ENCODE measurements at regions of chr5 and their contacts with region 1.

Region 1: DNA sequence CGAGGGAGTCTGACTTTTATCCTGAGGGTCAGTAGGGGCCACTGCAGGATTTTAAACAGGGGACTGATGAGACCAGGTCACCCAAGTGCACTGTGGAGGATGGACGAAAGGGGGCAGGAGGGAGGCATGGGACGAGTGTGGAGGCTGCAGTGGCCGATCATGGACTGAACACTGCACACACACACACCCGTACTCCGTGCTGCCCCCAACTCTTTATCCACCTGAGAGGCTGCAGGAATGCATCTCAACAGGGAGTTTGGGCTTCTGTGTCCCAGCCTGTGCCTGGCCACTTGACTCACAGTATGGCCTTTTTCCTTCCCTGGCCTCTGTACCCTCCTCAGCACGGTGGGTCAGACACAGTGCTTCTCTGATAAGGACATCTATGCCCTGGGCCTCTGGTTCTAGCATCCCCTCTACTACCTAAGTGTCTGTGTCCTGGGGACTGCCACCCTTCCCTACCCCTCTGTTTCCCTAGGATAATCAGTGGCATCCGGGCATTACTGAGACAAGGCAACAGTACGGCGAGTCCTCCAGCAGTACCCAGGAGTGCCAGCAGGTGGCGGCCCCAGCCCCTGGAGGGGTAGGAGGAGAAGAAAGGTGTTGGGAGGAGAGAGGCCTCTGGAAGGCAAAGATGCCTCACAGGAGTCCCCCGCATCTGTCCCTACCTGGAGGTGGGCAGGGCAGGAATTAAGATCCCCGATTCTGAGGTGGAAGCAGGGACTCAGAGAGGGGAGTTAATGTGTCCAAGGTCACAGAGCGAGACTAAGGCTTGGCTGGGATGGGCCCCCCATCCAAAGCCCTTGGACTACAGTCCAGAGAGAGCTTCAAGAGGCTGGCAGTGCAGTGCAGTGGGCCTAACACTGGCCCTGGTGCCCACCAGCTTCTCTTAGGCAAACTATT is 5.1 kb upstream of the CDX1 start:
- ATAC-seq: peak; percentile 60 to 87 (median 74)
- H3K4me3 ChIP-seq: no peak overlapping the region
- H3K27ac ChIP-seq: no peak overlapping the region
- H3K4me1 ChIP-seq: peaks cover 22 to 32% of the 10 kb centered on the region in 2 donors

Region 2: GRCh38 chr5:150217873-150218692 is 56.6 kb after region 1 on chr5:
- in situ Hi-C with region 1: loop called in 1 of 9 experiments (anchors 5 kb)
- ATAC-seq: peak; percentile 40 to 96 (median 94)
- H3K4me3 ChIP-seq: no peak overlapping the region
- H3K27ac ChIP-seq: no peak overlapping the region
- H3K4me1 ChIP-seq: no peaks in the 10 kb centered on the region

Region 3: DNA sequence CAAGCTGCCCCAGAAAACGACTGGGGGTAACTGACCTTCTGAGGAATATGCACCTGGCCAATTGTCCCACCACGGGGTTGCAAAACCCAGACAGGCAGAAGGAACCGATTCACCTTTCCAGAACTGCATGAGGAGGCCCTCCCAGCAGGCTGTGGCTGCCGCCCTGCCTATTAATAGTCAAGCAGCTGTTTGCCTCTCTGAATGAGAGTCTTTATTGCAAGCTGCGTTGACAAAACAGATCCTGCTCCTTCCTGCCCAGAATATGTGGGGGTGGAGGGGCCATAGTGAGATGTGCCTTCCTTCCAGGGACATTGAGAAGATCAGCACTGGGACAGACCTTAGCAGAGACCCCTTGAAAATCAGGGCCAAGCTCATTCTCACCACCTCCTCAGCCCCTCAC is 177.7 kb after region 1 on chr5:
- in situ Hi-C with region 1: loop called in 1 of 9 experiments (anchors 25 kb)
- ATAC-seq: peak in 7 of 8 experiments; percentile 21 to 94 (median 47)
- H3K4me3 ChIP-seq: no peak overlapping the region
- H3K27ac ChIP-seq: no peak overlapping the region
- H3K4me1 ChIP-seq: peaks cover 5 to 12% of the 10 kb centered on the region in 2 donors

Measured in motor neuron (in vitro differentiated cells).